MCF 10A (cell line): ENCODE measurements at regions of chr10 and their contacts with region 1.

Region 1: DNA sequence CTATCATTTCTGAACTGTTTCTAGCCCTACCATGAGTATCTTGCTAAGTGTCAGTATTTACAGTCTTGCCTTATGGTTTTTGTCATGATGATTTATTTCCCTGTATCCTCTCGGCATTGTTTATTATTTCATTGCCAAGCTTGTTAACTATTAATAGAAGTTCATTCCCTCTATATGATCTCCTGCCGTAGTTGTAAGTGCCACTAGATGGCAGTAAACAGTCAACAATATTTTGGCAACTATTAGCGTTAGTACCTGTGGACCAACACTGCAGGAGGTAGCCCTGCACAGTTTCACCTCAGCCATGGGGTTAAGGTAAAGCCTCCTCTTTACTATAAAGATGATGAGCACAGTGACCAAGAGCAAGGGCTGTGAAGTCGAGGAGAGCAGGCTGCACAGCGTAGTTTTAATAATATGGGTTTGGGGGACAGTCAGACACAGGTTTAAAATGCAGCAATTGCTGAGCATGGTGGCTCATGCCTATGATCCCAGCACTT is 26.1 kb upstream of the CCNJ start:
- DNase-seq: peak; percentile 75
- H3K4me3 Mint-ChIP-seq: no peak overlapping the region
- H3K27ac Mint-ChIP-seq: no peak overlapping the region
- H3K4me1 Mint-ChIP-seq: peaks cover 5% of the 10 kb centered on the region
- H3K27me3 Mint-ChIP-seq: peaks cover 10% of the 10 kb centered on the region
- CTCF ChIP-seq: peak; percentile 32

Region 2: GRCh38 chr10:95920798-95921426 is 96.3 kb before region 1 on chr10:
- CTCF ChIA-PET with region 1: no interaction called
- POLR2A ChIA-PET with region 1: no interaction called
- intact Hi-C with region 1: no loop called
- DNase-seq: no peak
- H3K4me3 Mint-ChIP-seq: no peak overlapping the region
- H3K27ac Mint-ChIP-seq: no peak overlapping the region
- H3K4me1 Mint-ChIP-seq: no peaks in the 10 kb centered on the region
- H3K27me3 Mint-ChIP-seq: no peaks in the 10 kb centered on the region
- CTCF ChIP-seq: no peak

Region 3: DNA sequence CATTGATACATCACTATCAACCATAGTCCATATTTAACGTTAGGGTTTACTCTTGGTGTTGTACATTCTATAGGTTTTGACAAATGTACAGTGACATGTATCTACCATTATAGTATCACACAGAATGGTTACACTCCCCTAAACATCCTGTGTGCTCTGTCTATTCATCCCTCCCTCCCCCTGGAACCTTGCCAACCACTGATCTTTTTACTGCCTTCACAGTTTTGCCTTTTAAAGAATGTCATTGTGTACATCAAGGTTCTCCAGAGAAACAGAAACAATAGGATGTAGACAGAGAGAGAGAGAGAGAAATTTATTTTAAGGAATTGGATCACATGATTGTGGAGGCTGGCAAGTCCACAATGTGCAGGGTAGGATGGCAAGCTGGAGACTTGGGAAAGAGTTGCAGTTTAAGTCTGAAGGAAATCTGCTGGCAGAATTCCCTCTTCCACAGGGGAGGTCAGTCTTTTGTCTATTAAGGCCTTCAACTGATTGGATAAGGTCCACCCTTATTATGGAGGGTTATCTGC is 18.9 kb before region 1 on chr10:
- CTCF ChIA-PET with region 1: interaction called, 56 read pairs
- POLR2A ChIA-PET with region 1: no interaction called
- intact Hi-C with region 1: no loop called
- DNase-seq: no peak
- H3K4me3 Mint-ChIP-seq: no peak overlapping the region
- H3K27ac Mint-ChIP-seq: no peak overlapping the region
- H3K4me1 Mint-ChIP-seq: no peaks in the 10 kb centered on the region
- H3K27me3 Mint-ChIP-seq: no peaks in the 10 kb centered on the region
- CTCF ChIP-seq: no peak

Region 4: DNA sequence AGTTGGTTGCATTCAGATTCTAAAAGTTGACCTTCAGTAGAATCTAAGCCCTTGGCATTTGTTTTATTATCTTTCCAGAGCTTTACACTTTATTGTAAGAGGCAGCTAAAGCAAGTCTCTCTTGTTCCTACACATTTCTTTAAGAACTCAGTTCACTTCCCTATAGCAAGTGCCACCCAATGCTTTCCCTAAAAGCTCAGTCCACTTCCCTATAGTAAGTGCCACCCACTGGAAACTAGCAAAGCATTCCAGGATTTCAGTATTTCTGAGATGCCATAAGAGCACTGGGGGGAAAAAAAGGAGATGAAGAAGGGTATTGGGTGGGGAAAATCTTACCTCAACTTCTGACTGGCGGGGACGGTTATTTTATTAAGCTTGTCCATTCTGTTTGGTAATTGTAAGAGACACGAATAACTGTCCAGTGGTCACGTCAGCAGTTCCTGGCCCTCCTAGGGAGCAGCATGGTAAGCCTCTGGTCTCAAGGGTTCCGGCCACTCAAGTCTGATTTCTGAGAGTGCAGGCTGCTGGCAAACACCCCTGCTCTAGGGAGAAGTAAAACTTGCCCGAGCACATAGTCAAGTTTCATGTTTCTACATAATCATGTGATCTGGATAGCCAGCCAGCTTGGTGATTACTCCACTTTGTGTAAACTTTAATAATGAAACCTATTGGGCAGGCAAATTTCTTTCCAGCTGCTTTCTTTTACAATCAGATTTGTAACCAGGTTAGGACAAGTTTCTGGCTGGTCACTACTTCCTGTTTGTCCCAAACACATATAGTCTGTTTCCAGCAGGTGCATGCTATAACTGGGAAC is 254.0 kb after region 1 on chr10 and contains the start of gene BLNK:
- CTCF ChIA-PET with region 1: interaction called, 11 read pairs
- POLR2A ChIA-PET with region 1: no interaction called
- intact Hi-C with region 1: no loop called
- DNase-seq: peak; percentile 79
- H3K4me3 Mint-ChIP-seq: peak within 1 kb of the TSS; percentile 74
- H3K27ac Mint-ChIP-seq: peak within 1 kb of the TSS; percentile 82
- H3K4me1 Mint-ChIP-seq: peaks cover 24% of the 10 kb centered on the region
- H3K27me3 Mint-ChIP-seq: no peaks in the 10 kb centered on the region
- CTCF ChIP-seq: no peak
- total RNA-seq, gene BLNK: 1.0 and 1.1 TPM in 2 replicates

Region 5: DNA sequence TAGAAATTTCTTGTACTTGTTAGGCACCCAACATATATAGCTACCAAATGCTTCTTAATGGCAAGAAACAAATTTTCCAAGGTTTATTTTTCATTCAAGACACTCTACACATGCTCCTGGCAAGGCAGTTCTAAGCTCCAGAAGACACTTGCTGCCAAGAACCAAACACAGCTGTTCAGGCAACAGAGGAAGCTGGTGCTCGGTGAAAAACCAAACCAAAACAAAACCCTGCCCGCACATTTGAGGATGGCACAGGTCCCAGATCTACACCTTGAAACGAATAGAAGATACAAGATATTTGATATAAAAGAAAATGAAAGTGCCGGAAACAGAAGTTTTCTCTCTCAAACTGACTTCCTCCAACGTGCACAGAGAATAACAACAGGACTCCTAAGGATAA is 282.1 kb after region 1 on chr10:
- CTCF ChIA-PET with region 1: interaction called, 170 read pairs
- POLR2A ChIA-PET with region 1: no interaction called
- intact Hi-C with region 1: no loop called
- DNase-seq: no peak
- H3K4me3 Mint-ChIP-seq: no peak overlapping the region
- H3K27ac Mint-ChIP-seq: no peak overlapping the region
- H3K4me1 Mint-ChIP-seq: no peaks in the 10 kb centered on the region
- H3K27me3 Mint-ChIP-seq: peaks cover 44% of the 10 kb centered on the region
- CTCF ChIP-seq: no peak

Region 6: DNA sequence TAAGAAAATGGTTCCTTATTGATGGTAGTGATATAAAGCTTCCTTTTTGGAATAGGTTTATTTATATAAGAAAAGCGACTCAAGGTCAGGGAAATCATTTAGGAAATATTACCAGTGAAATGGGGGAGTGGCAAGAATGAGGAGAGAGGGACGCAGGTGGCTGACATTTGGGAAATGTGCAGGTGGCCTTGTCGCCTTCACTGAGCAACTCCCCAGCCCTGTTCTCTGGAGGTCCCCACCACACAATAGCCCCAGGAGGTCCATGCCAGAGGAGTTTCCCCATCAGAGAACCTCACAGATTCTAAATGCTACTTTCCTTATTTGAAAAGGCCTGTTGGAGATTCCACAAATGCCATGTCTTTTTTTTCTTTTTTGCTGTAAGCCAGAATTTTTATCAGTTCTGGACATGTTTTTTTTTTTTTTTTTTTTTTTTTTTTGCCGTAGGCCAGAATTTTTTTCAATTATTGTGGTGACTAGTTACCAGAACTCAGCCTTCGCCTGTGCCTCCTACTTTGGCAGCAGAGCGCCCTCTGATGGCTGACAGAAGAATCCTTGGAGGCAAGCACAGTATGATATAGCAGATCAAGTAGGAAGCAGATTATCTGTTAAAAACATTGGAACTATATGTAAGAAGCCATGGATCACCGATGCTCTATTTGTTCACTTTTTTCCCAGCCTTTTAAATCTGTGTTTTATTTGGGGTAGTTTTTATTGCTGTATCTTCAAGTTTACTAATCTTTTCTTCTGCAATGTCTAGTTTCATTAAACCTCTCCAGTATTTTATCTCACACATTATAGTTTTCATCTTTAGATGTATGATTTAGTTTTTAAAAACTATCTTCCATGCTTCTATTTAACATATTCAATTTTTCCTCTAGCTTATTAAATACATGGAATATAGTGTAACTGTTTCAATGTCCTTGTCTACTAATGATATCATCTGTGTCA is 323.0 kb after region 1 on chr10:
- CTCF ChIA-PET with region 1: interaction called, 43 read pairs
- POLR2A ChIA-PET with region 1: no interaction called
- intact Hi-C with region 1: loop called (anchors 5 kb)
- DNase-seq: peak; percentile 75
- H3K4me3 Mint-ChIP-seq: no peak overlapping the region
- H3K27ac Mint-ChIP-seq: no peak overlapping the region
- H3K4me1 Mint-ChIP-seq: no peaks in the 10 kb centered on the region
- H3K27me3 Mint-ChIP-seq: peaks cover 12% of the 10 kb centered on the region
- CTCF ChIP-seq: peak; percentile 83